B cell (primary cell): ENCODE measurements at regions of chr6 and their contacts with region 1.

Region 1: DNA sequence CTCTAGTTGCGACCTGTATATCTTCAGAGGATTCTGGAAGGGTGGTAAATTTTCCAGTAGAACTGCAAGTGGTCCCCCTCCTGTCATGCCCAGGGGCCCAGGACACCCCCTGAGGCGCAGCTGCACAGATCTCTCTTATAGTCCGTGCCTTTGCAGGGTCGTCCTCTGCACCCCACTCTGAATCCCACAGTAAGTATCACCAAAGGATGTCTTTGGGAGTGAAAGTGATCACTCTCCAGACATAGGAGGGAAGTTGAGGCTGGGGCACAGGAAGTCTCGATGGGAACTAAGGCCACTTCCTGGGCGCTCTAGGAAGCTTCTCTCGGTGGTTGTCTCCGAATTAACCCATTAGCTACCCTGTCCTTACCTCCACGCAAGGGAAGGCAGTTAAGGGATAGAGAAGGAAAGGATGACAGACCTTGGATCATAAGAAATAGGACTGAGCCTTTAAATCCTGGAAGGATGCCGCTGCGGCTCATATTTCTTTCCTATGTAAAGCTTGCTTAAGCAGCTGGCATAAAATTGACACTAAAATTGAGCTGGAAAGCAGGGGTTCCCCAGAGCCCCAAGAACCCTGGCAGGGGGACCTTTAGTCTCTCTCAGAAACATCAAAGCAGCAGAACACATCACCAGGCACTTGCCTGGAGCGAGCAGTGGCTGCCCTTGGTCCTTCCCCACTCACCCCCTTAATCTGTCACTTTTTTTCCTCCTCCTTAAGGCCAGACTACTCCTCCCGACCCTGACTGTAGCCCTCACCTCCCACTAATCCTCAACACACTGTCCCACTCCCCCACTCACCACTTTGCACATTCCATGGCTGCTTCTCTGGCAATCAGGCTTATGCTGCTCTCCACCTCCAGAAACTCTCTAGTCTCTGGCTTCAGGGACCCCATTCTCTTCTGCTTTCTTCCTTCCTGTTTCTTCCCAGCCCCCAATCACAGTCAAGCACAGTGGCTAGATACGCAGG is at the start of gene ZKSCAN4:
- DNase-seq: peak; percentile 89
- ATAC-seq: peak; percentile 90
- H3K4me3 ChIP-seq: peak within 1 kb of the TSS; percentile 59 to 99 (median 94)
- H3K4me3 Mint-ChIP-seq: peak within 1 kb of the TSS; percentile 98
- H3K27ac ChIP-seq: peak within 1 kb of the TSS; percentile 22 to 58
- H3K27ac Mint-ChIP-seq: peak within 1 kb of the TSS; percentile 78
- H3K4me1 ChIP-seq: peaks cover 14 to 20% of the 10 kb centered on the region in 2 donors
- H3K4me1 Mint-ChIP-seq: peaks cover 31% of the 10 kb centered on the region
- H3K27me3 ChIP-seq: peaks cover 0 to 3% (median 2%) of the 10 kb centered on the region in 4 experiments
- H3K27me3 Mint-ChIP-seq: no peaks in the 10 kb centered on the region
- CTCF ChIP-seq: no peak
- total RNA-seq, gene ZKSCAN4: 10.9 and 12.1 TPM in 2 replicates

Region 2: GRCh38 chr6:27388293-27389197 is 863.7 kb before region 1 on chr6 and contains the start of gene ZNF391:
- CTCF ChIA-PET with region 1: no interaction called
- POLR2A ChIA-PET with region 1: no interaction called
- intact Hi-C with region 1: loop called (anchors 2 kb)
- DNase-seq: peak; percentile 88
- ATAC-seq: peak; percentile 87
- H3K4me3 ChIP-seq: peak within 1 kb of the TSS; percentile 70 to 97 (median 94)
- H3K4me3 Mint-ChIP-seq: peak within 1 kb of the TSS; percentile 99
- H3K27ac ChIP-seq: peak within 1 kb of the TSS; percentile 64 to 83
- H3K27ac Mint-ChIP-seq: peak within 1 kb of the TSS; percentile 98
- H3K4me1 ChIP-seq: peaks cover 10 to 16% of the 10 kb centered on the region in 2 donors
- H3K4me1 Mint-ChIP-seq: peaks cover 17% of the 10 kb centered on the region
- H3K27me3 ChIP-seq: peaks cover 0 to 2% (median 0%) of the 10 kb centered on the region in 4 experiments
- H3K27me3 Mint-ChIP-seq: peaks cover under 1% of the 10 kb centered on the region
- CTCF ChIP-seq: no peak
- total RNA-seq, gene ZNF391: 4.4 and 7.0 TPM in 2 replicates

Region 3: GRCh38 chr6:27672113-27672799 is 580.0 kb before region 1 on chr6:
- CTCF ChIA-PET with region 1: no interaction called
- POLR2A ChIA-PET with region 1: no interaction called
- intact Hi-C with region 1: no loop called
- DNase-seq: peak; percentile 48
- ATAC-seq: no peak
- H3K4me3 ChIP-seq: peak overlapping the region in 1 of 5 experiments; percentile 24
- H3K4me3 Mint-ChIP-seq: peak overlapping the region; percentile 23
- H3K27ac ChIP-seq: no peak overlapping the region
- H3K27ac Mint-ChIP-seq: peak overlapping the region; percentile 41
- H3K4me1 ChIP-seq: peaks cover 21 to 22% of the 10 kb centered on the region in 2 donors
- H3K4me1 Mint-ChIP-seq: peaks cover 27% of the 10 kb centered on the region
- H3K27me3 ChIP-seq: peaks cover 0 to 75% (median 61%) of the 10 kb centered on the region in 4 experiments
- H3K27me3 Mint-ChIP-seq: peaks cover 71% of the 10 kb centered on the region
- CTCF ChIP-seq: no peak

Region 4: DNA sequence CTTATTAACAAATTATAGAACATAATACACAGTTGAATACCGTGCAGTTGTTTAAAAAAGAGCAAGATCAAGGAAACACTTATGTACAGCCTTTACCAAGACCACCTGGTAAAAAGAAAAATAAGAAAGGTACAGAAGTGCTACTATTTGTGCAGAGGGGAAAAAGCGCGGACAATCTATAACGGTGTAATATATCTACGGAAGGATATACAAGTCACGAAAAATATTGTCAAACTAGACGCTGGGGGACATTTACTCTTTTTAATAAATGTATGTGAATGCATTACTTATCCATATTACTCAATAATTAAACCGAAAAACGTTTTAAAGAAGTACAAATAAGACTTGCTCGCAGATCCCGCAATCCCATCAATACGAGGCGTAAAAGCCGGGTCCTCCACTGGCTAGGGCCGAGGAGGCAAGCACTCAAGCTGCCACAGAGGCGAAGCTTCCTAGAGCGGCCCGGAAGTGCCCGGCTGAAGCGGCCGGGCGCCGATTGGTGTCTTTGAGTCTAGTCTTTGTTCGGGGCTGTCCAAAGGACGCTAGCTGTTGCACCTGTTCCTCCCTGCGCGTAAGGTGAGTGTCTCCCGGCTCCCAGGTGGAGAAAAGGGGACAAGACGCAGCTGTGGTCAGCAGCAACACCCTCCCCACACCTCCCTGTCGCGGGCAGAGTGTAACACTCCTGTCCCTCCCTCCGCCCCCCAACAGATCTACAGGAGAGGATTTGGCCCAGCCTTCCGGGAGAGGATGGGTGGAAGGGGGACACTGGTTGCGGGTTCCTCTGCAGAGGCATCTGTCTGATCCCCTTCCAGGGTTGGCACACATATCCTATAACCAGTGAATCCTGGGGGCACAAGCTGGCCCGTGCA is 128.0 kb before region 1 on chr6 and contains the start of gene ZSCAN16:
- CTCF ChIA-PET with region 1: no interaction called
- POLR2A ChIA-PET with region 1: no interaction called
- intact Hi-C with region 1: loop called (anchors 1 kb)
- DNase-seq: peak; percentile 86
- ATAC-seq: peak; percentile 96
- H3K4me3 ChIP-seq: peak within 1 kb of the TSS; percentile 70 to 91 (median 75)
- H3K4me3 Mint-ChIP-seq: peak within 1 kb of the TSS; percentile 98
- H3K27ac ChIP-seq: peak within 1 kb of the TSS; percentile 68 to 74
- H3K27ac Mint-ChIP-seq: peak within 1 kb of the TSS; percentile 92
- H3K4me1 ChIP-seq: peaks cover 12 to 18% of the 10 kb centered on the region in 2 donors
- H3K4me1 Mint-ChIP-seq: peaks cover 31% of the 10 kb centered on the region
- H3K27me3 ChIP-seq: no peaks in the 10 kb centered on the region
- H3K27me3 Mint-ChIP-seq: no peaks in the 10 kb centered on the region
- CTCF ChIP-seq: no peak
- total RNA-seq, gene ZSCAN16: 15.4 and 15.8 TPM in 2 replicates

Region 5: GRCh38 chr6:28281288-28282064 is 29.2 kb after region 1 on chr6 and contains the start of gene PGBD1:
- CTCF ChIA-PET with region 1: no interaction called
- POLR2A ChIA-PET with region 1: no interaction called
- intact Hi-C with region 1: loop called (anchors 1 kb)
- DNase-seq: peak; percentile 63
- ATAC-seq: peak; percentile 87
- H3K4me3 ChIP-seq: peak within 1 kb of the TSS; percentile 45 to 61 (median 53)
- H3K4me3 Mint-ChIP-seq: peak within 1 kb of the TSS; percentile 93
- H3K27ac ChIP-seq: no peak within 1 kb of the TSS
- H3K27ac Mint-ChIP-seq: no peak within 1 kb of the TSS
- H3K4me1 ChIP-seq: peaks cover 7 to 9% of the 10 kb centered on the region in 2 donors
- H3K4me1 Mint-ChIP-seq: peaks cover 9% of the 10 kb centered on the region
- H3K27me3 ChIP-seq: peaks cover 0 to 16% (median 11%) of the 10 kb centered on the region in 4 experiments
- H3K27me3 Mint-ChIP-seq: peaks cover 19% of the 10 kb centered on the region
- CTCF ChIP-seq: no peak
- total RNA-seq, gene PGBD1: 1.8 and 2.4 TPM in 2 replicates

Region 6: GRCh38 chr6:28303570-28303969 is 51.3 kb after region 1 on chr6:
- CTCF ChIA-PET with region 1: no interaction called
- POLR2A ChIA-PET with region 1: no interaction called
- intact Hi-C with region 1: no loop called
- DNase-seq: no peak
- ATAC-seq: no peak
- H3K4me3 ChIP-seq: no peak overlapping the region
- H3K4me3 Mint-ChIP-seq: no peak overlapping the region
- H3K27ac ChIP-seq: no peak overlapping the region
- H3K27ac Mint-ChIP-seq: no peak overlapping the region
- H3K4me1 ChIP-seq: no peaks in the 10 kb centered on the region
- H3K4me1 Mint-ChIP-seq: peaks cover 8% of the 10 kb centered on the region
- H3K27me3 ChIP-seq: no peaks in the 10 kb centered on the region
- H3K27me3 Mint-ChIP-seq: no peaks in the 10 kb centered on the region
- CTCF ChIP-seq: no peak

Region 7: DNA sequence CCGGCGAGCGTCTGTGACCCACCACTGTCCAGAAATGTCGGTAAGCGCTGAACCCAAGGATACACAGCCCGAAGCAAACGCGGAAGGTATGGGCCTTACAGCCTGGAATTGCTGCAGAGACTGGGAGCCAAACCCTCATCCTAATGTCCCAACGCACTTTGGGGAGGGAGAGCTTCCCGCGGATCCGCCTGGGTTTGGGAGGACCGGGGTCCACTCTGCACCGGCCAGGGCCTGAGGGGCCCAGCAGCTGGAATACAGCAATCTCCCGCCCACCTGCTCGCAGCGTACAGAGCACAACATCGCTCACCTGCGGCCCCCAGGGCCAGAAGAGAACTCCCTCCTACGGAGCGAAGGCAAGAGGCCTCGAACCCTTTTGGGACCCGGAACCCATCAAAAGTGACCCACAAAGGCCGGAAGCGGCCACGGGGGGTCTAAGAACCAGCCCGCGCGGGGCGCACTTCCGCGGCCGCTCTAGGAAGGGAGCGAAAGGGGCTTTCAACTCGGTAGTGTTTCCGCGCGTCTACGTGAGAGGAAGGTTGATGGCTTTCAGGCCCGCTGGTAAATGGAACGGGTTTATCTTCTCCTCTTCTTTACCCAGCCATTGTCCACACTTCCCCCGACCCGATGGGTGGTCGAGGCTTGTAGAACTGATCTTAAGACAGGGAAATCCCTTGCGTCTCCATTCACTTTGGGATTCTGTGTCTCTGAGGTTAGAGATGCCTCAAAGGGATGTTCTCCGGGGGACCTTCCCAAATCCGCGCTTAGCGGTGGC is 147.2 kb after region 1 on chr6 and contains the start of gene ZSCAN12:
- CTCF ChIA-PET with region 1: interaction called, 6 read pairs
- POLR2A ChIA-PET with region 1: no interaction called
- intact Hi-C with region 1: loop called (anchors 1 kb)
- DNase-seq: peak; percentile 91
- ATAC-seq: peak; percentile 91
- H3K4me3 ChIP-seq: peak within 1 kb of the TSS; percentile 67 to 96 (median 75)
- H3K4me3 Mint-ChIP-seq: peak within 1 kb of the TSS; percentile 93
- H3K27ac ChIP-seq: peak within 1 kb of the TSS; percentile 35 to 87
- H3K27ac Mint-ChIP-seq: peak within 1 kb of the TSS; percentile 92
- H3K4me1 ChIP-seq: peaks cover 16 to 17% of the 10 kb centered on the region in 2 donors
- H3K4me1 Mint-ChIP-seq: peaks cover 34% of the 10 kb centered on the region
- H3K27me3 ChIP-seq: peaks cover 0 to 17% (median 8%) of the 10 kb centered on the region in 4 experiments
- H3K27me3 Mint-ChIP-seq: peaks cover 40% of the 10 kb centered on the region
- CTCF ChIP-seq: peak; percentile 78
- total RNA-seq, gene ZSCAN12: 14.8 and 15.6 TPM in 2 replicates